K562 (cell line): ENCODE measurements at regions of chr9 and their contacts with region 1.

Region 1: DNA sequence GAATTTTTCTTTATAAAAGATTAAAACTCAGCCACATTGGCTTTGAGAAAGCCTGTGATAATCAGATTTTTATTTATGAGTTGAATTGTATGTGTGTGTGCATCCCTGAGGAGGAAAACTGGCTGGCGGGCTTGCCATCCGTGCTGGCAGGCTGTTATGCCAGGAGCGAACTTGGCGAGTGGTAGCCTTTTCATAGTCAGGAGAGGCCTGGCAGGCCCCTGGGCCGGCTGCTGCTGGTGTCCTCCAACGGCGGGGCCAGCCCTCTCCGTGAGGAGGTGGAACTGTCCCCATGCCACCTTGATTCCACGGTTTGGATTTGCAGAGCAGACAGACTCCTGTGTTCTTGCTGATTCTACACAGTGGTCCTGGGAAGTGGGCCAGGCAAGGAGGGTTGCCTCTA is 43.3 kb downstream of the ZNF618 start:
- DNase-seq: no peak
- ATAC-seq: no peak
- H3K4me3 ChIP-seq: no peak overlapping the region
- H3K27ac ChIP-seq: no peak overlapping the region
- H3K4me1 ChIP-seq: no peaks in the 10 kb centered on the region
- H3K27me3 ChIP-seq: no peaks in the 10 kb centered on the region
- CTCF ChIP-seq: no peak
- EP300 ChIP-seq: no peak
- POLR2A ChIP-seq: no peak
- RAD21 ChIP-seq: no peak

Region 2: DNA sequence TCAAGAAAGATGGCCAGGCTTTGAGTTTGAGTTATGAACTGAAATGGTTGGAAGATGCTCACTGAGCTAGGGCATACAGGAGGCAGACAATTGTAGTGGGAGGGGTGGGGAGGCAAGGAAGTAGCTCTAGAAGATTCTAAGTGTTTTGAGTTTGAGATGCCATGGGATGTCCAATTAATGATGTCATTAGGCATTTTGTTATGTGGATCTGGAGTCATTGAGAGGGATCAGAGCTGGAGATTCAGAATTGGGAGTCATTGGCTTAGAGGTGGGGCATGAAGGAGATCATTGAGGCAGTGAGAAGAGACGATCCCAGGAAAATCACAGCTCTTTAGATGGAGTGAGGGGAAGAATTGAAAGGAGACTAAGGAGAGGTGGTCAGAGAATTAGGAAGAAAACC is 154.8 kb before region 1 on chr9:
- CTCF ChIA-PET with region 1: no interaction called
- POLR2A ChIA-PET with region 1: no interaction called
- in situ Hi-C with region 1: no loop called
- intact Hi-C with region 1: no loop called
- DNase-seq: no peak
- ATAC-seq: no peak
- H3K4me3 ChIP-seq: no peak overlapping the region
- H3K27ac ChIP-seq: no peak overlapping the region
- H3K4me1 ChIP-seq: no peaks in the 10 kb centered on the region
- H3K27me3 ChIP-seq: no peaks in the 10 kb centered on the region
- CTCF ChIP-seq: no peak
- EP300 ChIP-seq: no peak
- POLR2A ChIP-seq: no peak
- RAD21 ChIP-seq: no peak

Region 3: GRCh38 chr9:113876151-113876992 is 43.0 kb before region 1 on chr9 and contains the start of gene ZNF618:
- CTCF ChIA-PET with region 1: no interaction called
- POLR2A ChIA-PET with region 1: interaction called, 4 read pairs
- in situ Hi-C with region 1: loop called (anchors 5 kb)
- intact Hi-C with region 1: no loop called
- DNase-seq: peak; percentile 32 to 72 (median 66)
- ATAC-seq: peak; percentile 70
- H3K4me3 ChIP-seq: peak within 1 kb of the TSS; percentile 87
- H3K27ac ChIP-seq: peak within 1 kb of the TSS; percentile 66
- H3K4me1 ChIP-seq: peaks cover 0 to 14% of the 10 kb centered on the region in 2 experiments; a peak in 2 of 5 replicates
- H3K27me3 ChIP-seq: no peaks in the 10 kb centered on the region; a peak in 3 of 5 replicates
- CTCF ChIP-seq: peak; percentile 3 to 48 (median 32); a peak in 3 of 6 replicates
- EP300 ChIP-seq: no peak
- POLR2A ChIP-seq: no peak
- RAD21 ChIP-seq: no peak
- polyA plus RNA-seq, gene ZNF618: 0.22 to 0.32 TPM

Region 4: GRCh38 chr9:113932906-113933584 is 13.7 kb after region 1 on chr9:
- CTCF ChIA-PET with region 1: no interaction called
- POLR2A ChIA-PET with region 1: interaction called, 3 read pairs
- in situ Hi-C with region 1: no loop called
- intact Hi-C with region 1: loop called (anchors 2 kb)
- DNase-seq: no peak
- ATAC-seq: no peak
- H3K4me3 ChIP-seq: no peak overlapping the region
- H3K27ac ChIP-seq: no peak overlapping the region
- H3K4me1 ChIP-seq: peaks cover 0 to 11% of the 10 kb centered on the region in 2 experiments; a peak in 3 of 5 replicates
- H3K27me3 ChIP-seq: peaks cover 0 to 4% of the 10 kb centered on the region in 2 experiments; a peak in 1 of 5 replicates
- CTCF ChIP-seq: no peak
- EP300 ChIP-seq: no peak
- POLR2A ChIP-seq: no peak
- RAD21 ChIP-seq: no peak